Activated CD4-positive, alpha-beta T cell treated with anti-CD3 and anti-CD28 coated beads, Interleukin-2, amount 10 ng/mL, durations not matched to agents 24 days and 14 days (primary cell): ENCODE measurements at regions of chr1 and their contacts with region 1.

Region 1: GRCh38 chr1:196660852-196661251 is 9.0 kb downstream of the CFH start:
- DNase-seq: no peak
- H3K4me3 Mint-ChIP-seq: no peak overlapping the region
- H3K27ac Mint-ChIP-seq: no peak overlapping the region
- H3K4me1 Mint-ChIP-seq: no peaks in the 10 kb centered on the region
- H3K27me3 Mint-ChIP-seq: peaks cover 1% of the 10 kb centered on the region

Region 2: GRCh38 chr1:196148367-196148970 is 512.4 kb before region 1 on chr1:
- intact Hi-C with region 1: loop called (anchors 1 kb)
- DNase-seq: no peak
- H3K4me3 Mint-ChIP-seq: no peak overlapping the region
- H3K27ac Mint-ChIP-seq: no peak overlapping the region
- H3K4me1 Mint-ChIP-seq: no peaks in the 10 kb centered on the region
- H3K27me3 Mint-ChIP-seq: no peaks in the 10 kb centered on the region

Region 3: GRCh38 chr1:196355206-196355786 is 305.6 kb before region 1 on chr1:
- intact Hi-C with region 1: loop called (anchors 2 kb)
- DNase-seq: no peak
- H3K4me3 Mint-ChIP-seq: no peak overlapping the region
- H3K27ac Mint-ChIP-seq: no peak overlapping the region
- H3K4me1 Mint-ChIP-seq: no peaks in the 10 kb centered on the region
- H3K27me3 Mint-ChIP-seq: no peaks in the 10 kb centered on the region